Right ventricle myocardium superior (tissue), 1 donor: ENCODE measurements at regions of chr4 and their contacts with region 1.

Region 1: DNA sequence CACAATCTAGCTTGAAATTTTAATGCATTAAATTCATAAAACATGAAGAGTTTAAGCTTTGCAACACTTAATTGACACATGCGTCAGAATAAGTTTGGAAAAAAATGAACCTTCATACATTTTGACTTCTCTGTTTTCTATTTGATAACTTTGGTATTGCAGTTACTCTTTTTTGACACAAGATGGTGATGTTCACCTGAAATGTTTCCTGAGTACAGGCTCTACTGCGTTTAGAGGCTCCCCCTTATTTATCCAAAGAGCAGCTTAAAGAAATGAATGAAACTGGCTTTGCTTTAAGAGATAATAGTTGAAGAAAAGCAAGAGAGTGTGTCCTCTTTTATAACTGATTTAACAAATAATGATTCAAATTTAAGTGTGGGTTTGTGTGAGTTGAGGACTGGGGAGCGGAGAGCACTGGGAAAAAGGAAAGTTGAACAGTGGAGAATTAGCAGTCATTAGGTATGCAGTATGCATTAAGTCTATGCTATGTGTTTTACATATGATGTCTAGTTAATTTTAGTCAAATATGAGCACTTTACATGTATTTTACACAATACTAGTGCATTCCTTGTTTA is 180.6 kb upstream of the NUDT6 start:
- DNase-seq: no peak
- ATAC-seq: peak; percentile 79

Region 2: GRCh38 chr4:123182289-123182688 is 79.3 kb after region 1 on chr4:
- intact Hi-C with region 1: no loop called
- DNase-seq: no peak
- ATAC-seq: no peak

Region 3: GRCh38 chr4:123444290-123444731 is 341.3 kb after region 1 on chr4:
- intact Hi-C with region 1: no loop called
- DNase-seq: peak; percentile 56
- ATAC-seq: peak; percentile 91

Region 4: GRCh38 chr4:123564758-123565346 is 461.9 kb after region 1 on chr4:
- intact Hi-C with region 1: loop called (anchors 10 kb)
- DNase-seq: no peak
- ATAC-seq: peak; percentile 90

Region 5: GRCh38 chr4:124111922-124112321 is 1008.9 kb after region 1 on chr4:
- intact Hi-C with region 1: loop called (anchors 10 kb)
- DNase-seq: no peak
- ATAC-seq: peak; percentile 96

Region 6: DNA sequence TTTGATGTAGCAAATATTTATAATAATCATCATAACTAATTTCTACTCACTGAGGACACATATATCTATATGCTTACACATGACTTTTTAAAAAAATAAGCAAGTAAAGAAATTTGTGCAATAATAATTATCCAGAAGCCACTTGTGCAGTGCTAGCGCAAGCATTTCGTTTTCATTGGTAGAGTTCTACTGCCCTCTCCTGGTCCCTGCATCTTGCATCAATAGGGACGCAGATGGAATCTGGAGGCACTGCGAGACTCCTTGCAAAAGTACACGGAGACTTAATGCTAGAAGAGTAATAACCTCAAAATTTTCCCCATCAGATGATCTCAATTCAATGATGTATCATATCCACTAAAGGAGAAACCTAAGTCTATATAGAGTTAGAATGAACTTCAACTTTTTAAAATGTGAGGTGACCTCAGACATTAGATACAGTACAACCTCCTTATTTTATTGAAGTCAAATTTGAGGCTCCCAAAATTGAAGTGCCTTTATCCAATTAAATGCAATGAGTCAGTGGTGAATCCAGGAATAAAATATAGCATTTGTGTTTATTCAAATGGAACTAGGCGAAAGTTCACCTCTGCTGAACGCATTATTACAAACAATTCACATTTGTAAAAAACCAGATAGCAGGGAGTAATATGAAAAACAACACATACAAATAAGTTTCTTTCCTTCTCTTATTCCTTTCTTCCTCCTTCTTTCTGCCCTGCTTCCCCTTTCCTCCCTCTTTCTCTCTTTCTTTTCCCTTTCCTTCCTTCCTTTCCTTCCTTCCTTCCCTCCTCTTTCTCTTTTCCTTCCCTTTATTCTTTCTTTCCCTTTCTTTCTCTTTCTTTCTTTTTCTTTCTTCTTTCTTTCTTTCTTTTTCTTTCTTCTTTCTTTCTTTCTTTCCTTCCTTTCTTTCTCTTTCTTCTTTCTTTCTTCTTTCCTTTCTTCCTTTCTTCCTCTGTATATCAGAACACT is 1159.5 kb after region 1 on chr4:
- intact Hi-C with region 1: loop called (anchors 10 kb)
- DNase-seq: peak; percentile 42
- ATAC-seq: peak; percentile 89